GM12878 (cell line): ENCODE measurements at regions of chr12 and their contacts with region 1.

Region 1: DNA sequence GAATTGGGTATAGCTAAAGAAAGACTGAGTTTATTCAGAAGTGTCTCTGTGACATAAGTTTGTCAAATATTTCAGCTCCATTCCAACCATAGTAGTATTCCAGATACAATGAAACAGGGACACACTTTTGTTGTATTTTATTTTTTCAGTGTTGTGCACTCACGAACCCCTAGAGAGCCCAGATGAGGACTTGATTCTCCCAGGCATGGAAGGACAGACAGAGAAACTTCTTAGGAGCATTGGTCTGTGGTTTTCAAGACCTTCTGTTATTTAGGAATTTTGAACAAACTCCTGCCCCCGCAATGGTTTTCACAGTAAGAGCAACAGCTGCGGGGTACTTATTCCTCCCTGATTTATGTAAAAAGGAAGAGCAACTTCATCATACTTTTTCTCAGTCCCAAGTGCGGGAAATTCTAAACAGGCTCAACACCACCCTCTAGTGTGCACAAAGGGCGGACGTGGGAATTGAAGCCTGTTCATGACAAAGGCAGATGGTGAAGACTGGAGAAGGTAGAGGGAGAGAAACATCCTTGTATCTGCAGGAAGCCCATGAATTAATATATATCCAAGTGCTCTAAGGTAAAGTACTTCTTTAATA is 147.6 kb downstream of the PAH start:
- DNase-seq: peak; percentile 40
- ATAC-seq: peak; percentile 96
- H3K4me3 ChIP-seq: no peak overlapping the region
- H3K27ac ChIP-seq: no peak overlapping the region
- H3K4me1 ChIP-seq: no peaks in the 10 kb centered on the region
- H3K27me3 ChIP-seq: no peaks in the 10 kb centered on the region
- CTCF ChIP-seq: peak; percentile 80 to 87 (median 82)
- EP300 ChIP-seq: no peak
- POLR2A ChIP-seq: no peak
- RAD21 ChIP-seq: peak; percentile 96

Region 2: GRCh38 chr12:102095675-102096263 is 673.6 kb before region 1 on chr12:
- CTCF ChIA-PET with region 1: interaction called, 17 read pairs
- POLR2A ChIA-PET with region 1: interaction called, 3 read pairs
- RAD21 ChIA-PET with region 1: interaction called, 6 read pairs
- SMC1A ChIA-PET with region 1: interaction called, 8 read pairs
- in situ Hi-C with region 1: no loop called
- intact Hi-C with region 1: loop called (anchors 2 kb)
- DNase-seq: peak; percentile 4
- ATAC-seq: peak; percentile 92
- H3K4me3 ChIP-seq: no peak overlapping the region
- H3K27ac ChIP-seq: no peak overlapping the region
- H3K4me1 ChIP-seq: peaks cover 10% of the 10 kb centered on the region
- H3K27me3 ChIP-seq: no peaks in the 10 kb centered on the region
- CTCF ChIP-seq: peak; percentile 48 to 67 (median 51); a peak in 4 of 6 replicates
- EP300 ChIP-seq: no peak
- POLR2A ChIP-seq: no peak
- RAD21 ChIP-seq: peak; percentile 69

Region 3: GRCh38 chr12:102300824-102301461 is 468.5 kb before region 1 on chr12:
- CTCF ChIA-PET with region 1: interaction called, 14 read pairs
- POLR2A ChIA-PET with region 1: no interaction called
- RAD21 ChIA-PET with region 1: interaction called, 7 read pairs
- SMC1A ChIA-PET with region 1: interaction called, 17 read pairs
- in situ Hi-C with region 1: no loop called
- intact Hi-C with region 1: no loop called
- DNase-seq: peak; percentile 61
- ATAC-seq: peak; percentile 98
- H3K4me3 ChIP-seq: no peak overlapping the region
- H3K27ac ChIP-seq: no peak overlapping the region
- H3K4me1 ChIP-seq: no peaks in the 10 kb centered on the region
- H3K27me3 ChIP-seq: no peaks in the 10 kb centered on the region
- CTCF ChIP-seq: peak; percentile 41 to 47 (median 42); a peak in 4 of 6 replicates
- EP300 ChIP-seq: no peak
- POLR2A ChIP-seq: no peak
- RAD21 ChIP-seq: peak; percentile 57

Region 4: DNA sequence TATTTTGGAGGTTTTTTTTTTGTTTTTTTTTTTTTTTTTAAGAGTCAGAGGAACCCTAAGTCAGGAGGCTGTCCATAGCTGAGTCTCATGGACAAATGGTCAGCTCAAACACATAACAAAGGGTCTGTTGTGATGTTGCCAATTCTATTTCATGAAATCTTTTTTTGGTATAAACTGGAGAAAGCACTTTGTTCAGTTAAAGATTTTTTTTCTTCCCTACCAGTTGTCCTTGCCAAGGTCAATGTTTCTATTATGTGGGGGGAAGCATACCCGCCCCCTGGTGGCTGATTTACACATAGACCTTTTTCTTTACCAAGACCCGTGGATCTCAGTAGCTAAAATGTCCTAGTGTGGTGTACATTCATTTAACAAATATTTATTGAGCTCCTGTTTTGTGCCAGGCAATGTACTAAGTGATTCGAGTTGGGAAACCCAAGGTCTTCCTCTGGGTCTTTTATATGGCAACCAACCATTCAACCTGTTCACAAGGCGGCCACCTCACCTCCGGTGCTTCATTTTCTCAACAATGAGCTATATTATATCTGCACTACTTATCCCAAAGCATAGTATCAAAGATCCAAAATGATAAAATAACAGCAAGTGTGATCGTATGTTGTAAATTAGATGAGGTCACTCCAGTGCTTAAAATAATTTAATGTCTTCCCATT is 66.8 kb before region 1 on chr12:
- CTCF ChIA-PET with region 1: interaction called, 15 read pairs
- POLR2A ChIA-PET with region 1: no interaction called
- RAD21 ChIA-PET with region 1: interaction called, 10 read pairs
- SMC1A ChIA-PET with region 1: interaction called, 3 read pairs
- in situ Hi-C with region 1: no loop called
- intact Hi-C with region 1: loop called (anchors 2 kb)
- DNase-seq: no peak
- ATAC-seq: peak; percentile 78
- H3K4me3 ChIP-seq: no peak overlapping the region
- H3K27ac ChIP-seq: no peak overlapping the region
- H3K4me1 ChIP-seq: no peaks in the 10 kb centered on the region
- H3K27me3 ChIP-seq: no peaks in the 10 kb centered on the region
- CTCF ChIP-seq: peak; percentile 40 to 54 (median 49)
- EP300 ChIP-seq: no peak
- POLR2A ChIP-seq: no peak
- RAD21 ChIP-seq: peak; percentile 61

Region 5: DNA sequence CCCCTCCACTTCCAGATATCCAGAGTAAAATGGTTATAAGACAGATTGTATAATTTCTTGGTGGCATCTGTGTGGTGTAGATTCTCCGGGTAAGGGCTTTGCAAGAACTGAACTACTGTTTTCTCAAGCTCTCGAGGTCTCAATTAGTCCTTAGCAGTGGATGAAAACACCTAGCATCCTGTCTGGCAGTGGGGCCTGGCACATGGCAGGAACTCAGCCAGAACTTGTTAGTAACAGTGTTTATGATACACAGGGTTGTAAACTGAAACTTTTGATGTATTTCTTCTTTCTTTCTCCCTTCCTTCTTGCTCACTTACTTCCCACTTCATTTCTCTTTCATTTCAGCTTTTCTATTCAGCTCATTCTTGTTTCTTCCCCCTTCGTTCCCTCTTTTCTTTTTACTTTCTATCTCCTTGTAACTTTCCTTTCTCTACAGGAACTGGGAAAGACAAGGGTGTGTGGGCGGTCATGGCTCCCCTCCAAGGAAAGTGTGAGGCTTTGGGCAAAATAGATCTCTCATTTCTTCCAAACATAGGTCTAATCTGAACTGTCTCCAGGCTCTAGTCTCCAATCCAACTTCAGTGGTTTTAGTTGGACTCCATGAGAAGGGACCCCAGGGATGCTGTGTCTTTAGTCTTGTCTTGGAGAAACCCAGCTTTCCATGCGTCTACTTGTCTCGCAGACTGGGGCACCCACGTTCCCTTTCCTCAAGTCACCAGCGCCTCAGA is 12.1 kb before region 1 on chr12:
- CTCF ChIA-PET with region 1: interaction called, 17 read pairs
- POLR2A ChIA-PET with region 1: interaction called, 3 read pairs
- RAD21 ChIA-PET with region 1: interaction called, 5 read pairs
- SMC1A ChIA-PET with region 1: interaction called, 33 read pairs
- in situ Hi-C with region 1: no loop called
- intact Hi-C with region 1: no loop called
- DNase-seq: no peak
- ATAC-seq: no peak
- H3K4me3 ChIP-seq: no peak overlapping the region
- H3K27ac ChIP-seq: no peak overlapping the region
- H3K4me1 ChIP-seq: no peaks in the 10 kb centered on the region
- H3K27me3 ChIP-seq: no peaks in the 10 kb centered on the region
- CTCF ChIP-seq: no peak
- EP300 ChIP-seq: no peak
- POLR2A ChIP-seq: no peak
- RAD21 ChIP-seq: no peak

Region 6: GRCh38 chr12:102811110-102811737 is 41.8 kb after region 1 on chr12:
- CTCF ChIA-PET with region 1: interaction called, 33 read pairs
- POLR2A ChIA-PET with region 1: no interaction called
- RAD21 ChIA-PET with region 1: interaction called, 14 read pairs
- SMC1A ChIA-PET with region 1: interaction called, 21 read pairs
- in situ Hi-C with region 1: no loop called
- intact Hi-C with region 1: no loop called
- DNase-seq: no peak
- ATAC-seq: peak; percentile 74
- H3K4me3 ChIP-seq: no peak overlapping the region
- H3K27ac ChIP-seq: no peak overlapping the region
- H3K4me1 ChIP-seq: no peaks in the 10 kb centered on the region
- H3K27me3 ChIP-seq: no peaks in the 10 kb centered on the region; a peak in 1 of 4 replicates
- CTCF ChIP-seq: peak; percentile 63 to 66 (median 64); a peak in 5 of 6 replicates
- EP300 ChIP-seq: no peak
- POLR2A ChIP-seq: no peak
- RAD21 ChIP-seq: peak; percentile 77

Region 7: GRCh38 chr12:102833687-102834445 is 64.4 kb after region 1 on chr12:
- CTCF ChIA-PET with region 1: no interaction called
- POLR2A ChIA-PET with region 1: no interaction called
- RAD21 ChIA-PET with region 1: no interaction called
- SMC1A ChIA-PET with region 1: no interaction called
- in situ Hi-C with region 1: no loop called
- intact Hi-C with region 1: no loop called
- DNase-seq: no peak
- ATAC-seq: no peak
- H3K4me3 ChIP-seq: no peak overlapping the region
- H3K27ac ChIP-seq: no peak overlapping the region
- H3K4me1 ChIP-seq: no peaks in the 10 kb centered on the region
- H3K27me3 ChIP-seq: no peaks in the 10 kb centered on the region
- CTCF ChIP-seq: no peak
- EP300 ChIP-seq: no peak
- POLR2A ChIP-seq: no peak
- RAD21 ChIP-seq: no peak